CD14-positive monocyte (primary cell): ENCODE measurements at regions of chr2 and their contacts with region 1.

Region 1: GRCh38 chr2:136117909-136118818 is at the start of gene CXCR4:
- DNase-seq: peak; percentile 76 to 83 (median 78)
- H3K4me3 ChIP-seq: peak within 1 kb of the TSS; percentile 98 to 99 (median 98)
- H3K4me3 Mint-ChIP-seq: peak within 1 kb of the TSS; percentile 98
- H3K27ac ChIP-seq: peak within 1 kb of the TSS; percentile 95 to 99
- H3K27ac Mint-ChIP-seq: peak within 1 kb of the TSS; percentile 95 to 99 (median 97)
- H3K4me1 ChIP-seq: peaks cover 59 to 66% of the 10 kb centered on the region in 2 donors
- H3K4me1 Mint-ChIP-seq: peaks cover 58% of the 10 kb centered on the region
- H3K27me3 ChIP-seq: no peaks in the 10 kb centered on the region
- H3K27me3 Mint-ChIP-seq: peaks cover 0 to 2% (median 0%) of the 10 kb centered on the region in 3 donors
- CTCF ChIP-seq: peak; percentile 9
- polyA plus RNA-seq, gene CXCR4: 140 to 1,274 (median 391) TPM

Region 2: GRCh38 chr2:135615404-135615803 is 502.8 kb before region 1 on chr2:
- intact Hi-C with region 1: no loop called
- DNase-seq: no peak
- H3K4me3 ChIP-seq: no peak overlapping the region
- H3K4me3 Mint-ChIP-seq: no peak overlapping the region
- H3K27ac ChIP-seq: no peak overlapping the region
- H3K27ac Mint-ChIP-seq: no peak overlapping the region
- H3K4me1 ChIP-seq: no peaks in the 10 kb centered on the region
- H3K4me1 Mint-ChIP-seq: no peaks in the 10 kb centered on the region
- H3K27me3 ChIP-seq: no peaks in the 10 kb centered on the region
- H3K27me3 Mint-ChIP-seq: no peaks in the 10 kb centered on the region
- CTCF ChIP-seq: no peak

Region 3: DNA sequence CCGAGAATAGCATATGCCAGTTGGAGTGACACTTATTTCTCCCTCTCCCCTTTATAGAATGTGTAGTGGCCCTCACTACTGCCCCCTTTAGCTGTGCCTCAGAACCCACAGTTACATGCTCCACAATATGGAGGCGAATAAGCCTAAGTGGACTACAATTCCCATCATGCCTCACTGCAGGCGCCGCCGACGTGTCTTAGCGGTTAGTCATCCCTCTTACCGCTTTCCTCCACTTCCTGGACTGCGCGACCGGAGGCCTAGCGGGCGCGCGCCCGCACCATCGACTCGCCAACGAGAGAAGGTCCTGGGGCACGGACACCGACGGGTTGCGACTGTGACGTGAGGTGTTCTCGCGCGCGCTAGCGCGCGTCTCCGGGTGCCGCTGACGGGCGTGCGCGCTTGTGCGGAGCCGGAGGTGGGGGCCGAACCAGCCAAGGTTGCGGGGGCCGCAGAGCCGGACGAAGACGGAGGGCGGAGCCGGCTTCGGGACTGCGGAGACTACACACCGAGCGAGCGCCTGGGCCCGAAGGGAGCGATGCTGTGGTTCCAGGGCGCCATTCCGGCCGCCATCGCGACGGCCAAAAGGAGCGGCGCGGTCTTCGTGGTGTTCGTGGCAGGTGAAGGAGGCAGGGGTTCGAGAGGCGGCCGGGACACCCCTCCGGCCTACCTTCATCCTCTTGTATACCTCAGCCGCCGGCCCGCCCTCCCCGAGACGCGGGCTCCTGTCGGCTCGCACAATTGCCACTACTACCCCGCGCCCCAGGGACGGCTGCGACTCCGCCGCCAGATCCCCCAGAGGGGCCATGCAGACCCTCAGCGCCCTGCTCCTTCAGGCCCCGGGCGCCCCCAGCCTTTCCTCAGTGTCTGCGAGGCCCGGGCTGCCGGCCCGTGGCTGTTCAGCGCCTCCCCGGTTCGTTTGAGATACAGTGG is 376.5 kb before region 1 on chr2 and contains the start of gene UBXN4:
- intact Hi-C with region 1: loop called in 1 of 2 experiments (anchors 10 kb)
- DNase-seq: peak; percentile 98 to 99 (median 98)
- H3K4me3 ChIP-seq: peak within 1 kb of the TSS; percentile 88 to 99 (median 90)
- H3K4me3 Mint-ChIP-seq: peak within 1 kb of the TSS; percentile 94 to 96
- H3K27ac ChIP-seq: peak within 1 kb of the TSS; percentile 98 to 100
- H3K27ac Mint-ChIP-seq: peak within 1 kb of the TSS; percentile 96 to 99 (median 99)
- H3K4me1 ChIP-seq: peaks cover 10 to 18% of the 10 kb centered on the region in 2 donors
- H3K4me1 Mint-ChIP-seq: peaks cover 23% of the 10 kb centered on the region
- H3K27me3 ChIP-seq: no peaks in the 10 kb centered on the region
- H3K27me3 Mint-ChIP-seq: peaks cover 0 to 1% (median 0%) of the 10 kb centered on the region in 3 donors
- CTCF ChIP-seq: peak; percentile 32
- polyA plus RNA-seq, gene UBXN4: 53.8 to 107 (median 74.2) TPM

Region 4: DNA sequence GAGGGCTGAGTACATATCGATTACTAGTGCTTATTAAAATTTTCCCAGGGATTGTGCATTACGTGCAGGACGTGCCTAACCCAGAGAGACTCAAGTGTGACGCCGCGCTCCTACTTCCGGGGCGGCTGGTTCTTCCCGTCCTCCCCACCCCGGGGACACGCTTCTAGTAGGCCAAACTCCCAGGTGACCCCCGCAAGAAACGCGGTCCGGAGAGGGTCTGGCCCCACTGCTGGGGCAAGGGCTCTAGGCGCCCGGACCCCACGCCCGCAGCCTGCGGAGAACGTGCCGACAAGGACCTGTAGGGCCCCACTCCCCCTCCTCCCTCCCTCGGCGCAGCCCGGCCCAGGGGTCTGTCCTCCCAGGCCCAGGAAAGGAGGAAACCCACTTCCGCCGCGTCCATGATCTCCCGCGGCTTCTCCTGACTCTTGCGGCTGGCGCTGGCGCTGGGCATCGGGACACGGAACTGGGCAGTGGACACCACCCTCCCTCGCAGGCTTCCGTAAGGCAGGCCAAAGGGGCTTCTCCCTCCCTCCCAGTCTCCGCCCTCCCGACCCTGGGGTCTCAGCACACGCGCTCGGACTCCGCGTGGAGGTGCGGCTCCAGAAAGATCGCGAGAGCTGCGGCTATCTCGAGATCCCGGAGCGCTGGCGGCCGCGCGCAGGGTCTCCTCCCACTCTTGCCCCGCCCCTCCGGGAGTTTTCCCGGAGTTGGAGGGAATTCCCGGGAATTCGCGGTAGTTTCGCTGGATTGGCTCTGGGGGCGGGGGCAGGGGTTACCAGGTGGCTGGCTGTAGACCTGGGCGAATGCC is 132.9 kb before region 1 on chr2 and contains the start of gene DARS1:
- intact Hi-C with region 1: loop called in 1 of 2 experiments (anchors 10 kb)
- DNase-seq: peak; percentile 71 to 88 (median 74)
- H3K4me3 ChIP-seq: peak within 1 kb of the TSS; percentile 46 to 96 (median 94)
- H3K4me3 Mint-ChIP-seq: peak within 1 kb of the TSS; percentile 90 to 95
- H3K27ac ChIP-seq: peak within 1 kb of the TSS; percentile 98 to 99
- H3K27ac Mint-ChIP-seq: peak within 1 kb of the TSS; percentile 92 to 97 (median 95)
- H3K4me1 ChIP-seq: peaks cover 22 to 39% of the 10 kb centered on the region in 2 donors
- H3K4me1 Mint-ChIP-seq: peaks cover 33% of the 10 kb centered on the region
- H3K27me3 ChIP-seq: no peaks in the 10 kb centered on the region
- H3K27me3 Mint-ChIP-seq: no peaks in the 10 kb centered on the region
- CTCF ChIP-seq: no peak
- polyA plus RNA-seq, gene DARS1: 24.4 to 53.0 (median 46.2) TPM

Region 5: GRCh38 chr2:136022396-136023146 is 95.6 kb before region 1 on chr2:
- intact Hi-C with region 1: loop called (anchors 5 kb)
- DNase-seq: peak; percentile 83 to 92 (median 91)
- H3K4me3 ChIP-seq: peak overlapping the region in 1 of 3 experiments; percentile 19
- H3K4me3 Mint-ChIP-seq: peak overlapping the region in 1 of 2 donors; percentile 17
- H3K27ac ChIP-seq: peak overlapping the region; percentile 46 to 82
- H3K27ac Mint-ChIP-seq: peak overlapping the region; percentile 82 to 93 (median 92)
- H3K4me1 ChIP-seq: peaks cover 83 to 85% of the 10 kb centered on the region in 2 donors
- H3K4me1 Mint-ChIP-seq: peaks cover 76% of the 10 kb centered on the region
- H3K27me3 ChIP-seq: no peaks in the 10 kb centered on the region
- H3K27me3 Mint-ChIP-seq: peaks cover 0 to 1% (median 0%) of the 10 kb centered on the region in 3 donors
- CTCF ChIP-seq: no peak

Region 6: GRCh38 chr2:136135921-136136906 is 18.1 kb after region 1 on chr2:
- intact Hi-C with region 1: loop called in 1 of 2 experiments (anchors 2 kb)
- DNase-seq: peak; percentile 30 to 53 (median 34)
- H3K4me3 ChIP-seq: peak overlapping the region in 2 of 3 experiments; percentile 6 to 66
- H3K4me3 Mint-ChIP-seq: peak overlapping the region; percentile 57 to 68
- H3K27ac ChIP-seq: peak overlapping the region; percentile 52 to 92
- H3K27ac Mint-ChIP-seq: peak overlapping the region; percentile 86 to 94 (median 89)
- H3K4me1 ChIP-seq: peaks cover 80 to 86% of the 10 kb centered on the region in 2 donors
- H3K4me1 Mint-ChIP-seq: peaks cover 96% of the 10 kb centered on the region
- H3K27me3 ChIP-seq: no peaks in the 10 kb centered on the region
- H3K27me3 Mint-ChIP-seq: peaks cover 0 to 2% (median 0%) of the 10 kb centered on the region in 3 donors
- CTCF ChIP-seq: no peak

Region 7: GRCh38 chr2:136238286-136239078 is 120.3 kb after region 1 on chr2:
- intact Hi-C with region 1: loop called (anchors 2 to 5 kb)
- DNase-seq: peak; percentile 93 to 98 (median 97)
- H3K4me3 ChIP-seq: no peak overlapping the region
- H3K4me3 Mint-ChIP-seq: peak overlapping the region in 1 of 2 donors; percentile 63
- H3K27ac ChIP-seq: peak overlapping the region; percentile 98 to 99
- H3K27ac Mint-ChIP-seq: peak overlapping the region; percentile 98 to 100 (median 99)
- H3K4me1 ChIP-seq: peaks cover 29 to 30% of the 10 kb centered on the region in 2 donors
- H3K4me1 Mint-ChIP-seq: peaks cover 55% of the 10 kb centered on the region
- H3K27me3 ChIP-seq: no peaks in the 10 kb centered on the region
- H3K27me3 Mint-ChIP-seq: peaks cover 0 to 9% (median 5%) of the 10 kb centered on the region in 3 donors
- CTCF ChIP-seq: no peak

Region 8: DNA sequence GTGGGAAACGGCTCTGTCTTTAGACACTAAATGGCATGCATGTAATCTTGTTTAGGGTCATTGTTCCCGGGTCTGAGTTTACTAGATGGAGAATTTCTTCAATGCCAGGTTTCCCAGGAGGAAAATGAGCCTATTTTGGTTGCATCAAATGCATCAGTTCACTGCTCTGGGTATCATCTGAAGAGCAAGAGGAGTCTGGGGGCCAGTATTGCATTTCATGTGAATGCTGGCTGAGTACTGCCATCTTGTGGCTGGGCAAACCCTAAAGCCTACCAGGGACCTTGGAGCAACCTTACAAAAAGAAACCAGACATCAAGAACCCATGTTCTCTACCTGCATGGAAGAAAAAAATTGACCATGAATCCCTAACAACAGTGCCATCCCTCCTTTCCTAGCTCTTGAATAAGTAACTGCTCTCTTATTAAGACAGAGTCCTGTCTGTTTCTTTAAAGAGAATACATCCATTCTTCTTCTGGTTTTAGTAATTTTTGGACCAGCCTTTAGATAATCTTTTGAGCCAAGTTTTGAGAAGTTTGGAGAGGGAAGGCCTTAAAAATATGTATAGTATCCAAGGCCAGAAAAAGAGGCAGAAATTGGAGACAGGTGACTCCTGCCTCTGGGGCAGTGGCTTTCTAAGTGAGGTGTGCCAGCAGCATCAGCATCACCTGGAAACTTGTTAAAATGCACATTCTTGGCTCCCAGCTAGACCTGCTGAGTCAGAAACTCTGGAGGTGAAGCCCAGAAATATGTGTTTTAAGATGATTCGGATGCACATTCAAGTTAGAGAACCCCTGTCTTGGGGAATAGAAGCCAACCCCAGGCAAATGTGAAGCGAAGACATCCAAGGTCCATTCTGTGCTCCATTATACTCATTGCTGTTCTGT is 260.8 kb after region 1 on chr2:
- intact Hi-C with region 1: loop called (anchors 5 to 10 kb)
- DNase-seq: peak; percentile 59 to 74 (median 67)
- H3K4me3 ChIP-seq: peak overlapping the region in 1 of 3 experiments; percentile 12
- H3K4me3 Mint-ChIP-seq: no peak overlapping the region
- H3K27ac ChIP-seq: peak overlapping the region in 1 of 2 donors; percentile 36
- H3K27ac Mint-ChIP-seq: peak overlapping the region in 5 of 7 donors; percentile 17 to 66 (median 27)
- H3K4me1 ChIP-seq: peaks cover 22 to 23% of the 10 kb centered on the region in 2 donors
- H3K4me1 Mint-ChIP-seq: peaks cover 32% of the 10 kb centered on the region
- H3K27me3 ChIP-seq: no peaks in the 10 kb centered on the region
- H3K27me3 Mint-ChIP-seq: peaks cover 0 to 1% (median 0%) of the 10 kb centered on the region in 3 donors
- CTCF ChIP-seq: peak; percentile 88